SK-N-SH (cell line): ENCODE measurements at regions of chr15 and their contacts with region 1.

Region 1: GRCh38 chr15:43510200-43511011 is 7.0 kb upstream of the MAP1A start:
- DNase-seq: peak; percentile 94
- H3K4me3 ChIP-seq: peak overlapping the region; percentile 55 to 75
- H3K27ac ChIP-seq: peak overlapping the region; percentile 95 to 99
- H3K4me1 ChIP-seq: peaks cover 15 to 29% of the 10 kb centered on the region in 2 experiments
- H3K27me3 ChIP-seq: no peaks in the 10 kb centered on the region
- CTCF ChIP-seq: peak; percentile 34
- EP300 ChIP-seq: peak in 1 of 2 experiments; percentile 9; a peak in 2 of 4 replicates
- RAD21 ChIP-seq: peak; percentile 37

Region 2: DNA sequence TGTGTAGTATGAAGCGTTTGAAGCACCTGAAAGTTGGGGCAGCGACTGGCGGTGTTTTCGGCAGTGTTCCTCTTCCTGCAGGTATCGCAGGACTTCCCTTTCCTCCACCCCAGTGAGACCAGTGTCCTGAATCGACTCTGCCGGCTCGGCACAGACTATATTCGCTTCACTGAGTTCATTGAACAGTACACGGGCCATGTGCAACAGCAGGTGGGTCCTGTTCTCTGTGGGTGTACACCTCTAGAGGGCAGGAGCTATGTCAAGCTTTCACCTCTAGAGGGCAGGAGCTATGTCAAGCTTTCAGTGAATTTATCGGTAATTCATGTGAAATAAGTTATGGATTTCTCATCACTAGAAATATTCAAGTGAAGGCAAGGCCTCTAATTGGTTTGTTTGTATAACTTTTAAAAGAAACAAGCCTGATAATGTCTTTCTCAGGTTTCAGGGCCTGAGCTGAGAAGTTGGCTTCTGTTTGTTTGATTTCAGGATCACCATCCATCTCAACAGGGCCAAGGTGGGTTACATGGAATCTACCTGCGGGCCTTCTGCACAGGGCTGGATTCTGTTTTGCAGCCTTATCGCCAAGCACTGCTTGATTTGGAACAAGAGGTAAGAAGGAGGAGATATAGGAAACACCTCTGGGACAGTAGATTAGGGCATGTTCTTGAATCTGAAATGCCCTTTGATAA is 134.2 kb before region 1 on chr15:
- CTCF ChIA-PET with region 1: interaction called, 10 read pairs
- POLR2A ChIA-PET with region 1: interaction called, 7 read pairs
- DNase-seq: peak; percentile 62
- H3K4me3 ChIP-seq: no peak overlapping the region; a peak in 1 of 4 replicates
- H3K27ac ChIP-seq: no peak overlapping the region
- H3K4me1 ChIP-seq: peaks cover 0 to 5% of the 10 kb centered on the region in 2 experiments; a peak in 2 of 4 replicates
- H3K27me3 ChIP-seq: no peaks in the 10 kb centered on the region
- CTCF ChIP-seq: peak; percentile 80
- EP300 ChIP-seq: no peak
- RAD21 ChIP-seq: peak; percentile 32

Region 3: GRCh38 chr15:43440721-43441281 is 69.6 kb before region 1 on chr15:
- CTCF ChIA-PET with region 1: interaction called, 36 read pairs
- POLR2A ChIA-PET with region 1: interaction called, 9 read pairs
- DNase-seq: peak; percentile 43
- H3K4me3 ChIP-seq: no peak overlapping the region; a peak in 1 of 4 replicates
- H3K27ac ChIP-seq: peak overlapping the region; percentile 36 to 92; a peak in 3 of 4 replicates
- H3K4me1 ChIP-seq: no peaks in the 10 kb centered on the region
- H3K27me3 ChIP-seq: no peaks in the 10 kb centered on the region
- CTCF ChIP-seq: peak; percentile 71
- EP300 ChIP-seq: peak in 1 of 2 experiments; percentile 63; a peak in 1 of 4 replicates
- RAD21 ChIP-seq: peak; percentile 66

Region 4: DNA sequence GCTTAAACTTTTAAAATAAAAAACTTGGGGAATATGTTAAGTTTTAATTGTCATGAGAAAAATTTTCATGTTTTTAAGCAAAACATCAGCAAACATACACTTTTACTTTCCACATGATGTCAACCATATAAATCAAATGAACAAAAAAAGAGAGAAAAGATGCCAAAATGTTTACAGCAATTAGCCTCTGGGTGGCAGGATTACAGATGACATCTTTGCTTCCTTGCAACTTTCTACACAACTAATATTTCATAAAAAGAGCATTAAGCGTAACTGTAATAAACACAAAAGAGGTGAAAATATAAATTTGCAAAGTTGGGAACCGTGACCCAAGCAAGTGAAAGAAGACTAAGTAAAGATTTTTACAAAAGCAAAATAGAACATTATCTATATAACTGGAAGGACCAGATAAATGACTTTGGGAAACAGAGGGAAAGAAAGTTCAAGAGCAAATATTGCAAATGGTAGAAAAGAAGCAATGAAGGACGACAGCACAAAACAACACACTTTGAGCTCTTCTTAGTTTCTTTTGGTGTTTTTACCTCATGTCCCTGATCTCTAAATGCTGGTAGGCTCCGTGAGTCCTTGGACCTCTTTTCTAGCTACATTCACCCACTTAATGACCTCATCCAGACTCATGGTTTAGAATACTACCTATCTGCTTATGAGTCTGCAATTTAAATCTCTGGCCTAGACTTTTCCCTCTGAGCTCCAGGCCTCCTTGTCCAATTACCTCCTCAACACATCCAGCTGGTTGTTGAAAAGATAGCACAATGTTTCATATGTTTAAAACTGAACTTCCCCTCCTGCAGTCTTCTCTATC is 26.9 kb before region 1 on chr15:
- CTCF ChIA-PET with region 1: interaction called, 35 read pairs
- POLR2A ChIA-PET with region 1: interaction called, 4 read pairs
- DNase-seq: peak; percentile 27
- H3K4me3 ChIP-seq: no peak overlapping the region
- H3K27ac ChIP-seq: peak overlapping the region; percentile 2 to 12; a peak in 1 of 4 replicates
- H3K4me1 ChIP-seq: no peaks in the 10 kb centered on the region
- H3K27me3 ChIP-seq: no peaks in the 10 kb centered on the region
- CTCF ChIP-seq: peak; percentile 59
- EP300 ChIP-seq: no peak
- RAD21 ChIP-seq: peak; percentile 63

Region 5: GRCh38 chr15:43492673-43493601 is 17.5 kb before region 1 on chr15 and contains the start of gene TP53BP1:
- CTCF ChIA-PET with region 1: interaction called, 42 read pairs
- POLR2A ChIA-PET with region 1: interaction called, 32 read pairs
- DNase-seq: peak; percentile 92
- H3K4me3 ChIP-seq: peak within 1 kb of the TSS; percentile 70 to 83
- H3K27ac ChIP-seq: peak within 1 kb of the TSS; percentile 75 to 86
- H3K4me1 ChIP-seq: peaks cover 3 to 4% of the 10 kb centered on the region in 2 experiments; a peak in 2 of 4 replicates
- H3K27me3 ChIP-seq: no peaks in the 10 kb centered on the region
- CTCF ChIP-seq: no peak
- EP300 ChIP-seq: no peak
- RAD21 ChIP-seq: 0 out of 2 replicates have a peak, but pooled peaks have one; percentile 1
- polyA plus RNA-seq, gene TP53BP1: 27.1 and 46.5 TPM in 2 replicates